ENCODE measurements at regions of chr18 and their contacts with region 1.

Region 1: DNA sequence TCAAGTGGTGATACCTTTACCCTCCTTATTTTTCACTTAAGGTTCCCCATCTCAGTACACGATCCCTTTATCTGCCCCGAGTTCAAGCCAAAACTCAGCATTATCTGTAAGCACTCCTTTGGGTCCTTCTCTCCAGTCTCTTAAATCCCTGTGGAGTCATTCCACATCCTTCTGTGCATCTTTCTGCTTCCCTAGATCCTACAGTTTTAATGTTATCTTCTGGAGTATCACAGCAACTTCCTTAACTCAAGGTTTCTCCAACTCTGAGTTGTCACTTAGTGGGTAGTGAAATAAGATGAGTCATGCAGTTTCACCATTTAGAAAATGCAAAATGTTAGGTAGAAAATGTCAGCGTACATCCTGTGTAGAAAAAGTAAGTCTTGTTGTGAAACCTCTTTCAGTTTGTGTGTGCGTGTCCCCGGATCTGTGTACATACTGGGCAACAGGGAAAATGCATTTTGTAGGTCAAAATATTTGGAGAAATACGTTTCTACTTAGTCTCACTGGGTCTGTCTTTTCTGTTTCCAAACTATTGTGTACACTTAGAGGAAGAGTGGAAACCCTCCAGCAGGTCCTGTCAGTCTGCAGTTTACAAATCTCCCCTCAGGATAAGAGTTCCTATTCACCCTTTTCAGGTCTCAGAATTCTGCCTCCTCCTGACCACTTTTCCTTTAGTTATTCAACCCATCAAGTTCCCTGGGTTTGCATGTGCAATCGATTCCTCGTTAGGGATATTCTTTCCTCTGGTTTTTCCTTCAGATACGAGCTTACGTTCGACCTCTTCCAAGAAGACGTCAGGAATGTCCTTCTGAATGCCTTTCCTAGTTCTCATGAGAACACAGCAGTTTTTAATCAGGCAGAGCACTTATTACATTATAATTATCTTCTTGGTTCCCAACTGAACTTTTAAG is 154.8 kb downstream of the TGIF1 start:
- DNase-seq: peak; percentile 80
- ATAC-seq: peak; percentile 90
- H3K4me3 ChIP-seq: peak overlapping the region; percentile 57
- H3K27ac ChIP-seq: peak overlapping the region; percentile 80
- H3K4me1 ChIP-seq: peaks cover 25% of the 10 kb centered on the region
- H3K27me3 ChIP-seq: no peaks in the 10 kb centered on the region
- CTCF ChIP-seq: no peak
- EP300 ChIP-seq: peak; percentile 49 to 57; a peak in 2 of 4 replicates
- POLR2A ChIP-seq: 0 out of 2 replicates have a peak, but pooled peaks have one; percentile 32
- RAD21 ChIP-seq: no peak

Region 2: DNA sequence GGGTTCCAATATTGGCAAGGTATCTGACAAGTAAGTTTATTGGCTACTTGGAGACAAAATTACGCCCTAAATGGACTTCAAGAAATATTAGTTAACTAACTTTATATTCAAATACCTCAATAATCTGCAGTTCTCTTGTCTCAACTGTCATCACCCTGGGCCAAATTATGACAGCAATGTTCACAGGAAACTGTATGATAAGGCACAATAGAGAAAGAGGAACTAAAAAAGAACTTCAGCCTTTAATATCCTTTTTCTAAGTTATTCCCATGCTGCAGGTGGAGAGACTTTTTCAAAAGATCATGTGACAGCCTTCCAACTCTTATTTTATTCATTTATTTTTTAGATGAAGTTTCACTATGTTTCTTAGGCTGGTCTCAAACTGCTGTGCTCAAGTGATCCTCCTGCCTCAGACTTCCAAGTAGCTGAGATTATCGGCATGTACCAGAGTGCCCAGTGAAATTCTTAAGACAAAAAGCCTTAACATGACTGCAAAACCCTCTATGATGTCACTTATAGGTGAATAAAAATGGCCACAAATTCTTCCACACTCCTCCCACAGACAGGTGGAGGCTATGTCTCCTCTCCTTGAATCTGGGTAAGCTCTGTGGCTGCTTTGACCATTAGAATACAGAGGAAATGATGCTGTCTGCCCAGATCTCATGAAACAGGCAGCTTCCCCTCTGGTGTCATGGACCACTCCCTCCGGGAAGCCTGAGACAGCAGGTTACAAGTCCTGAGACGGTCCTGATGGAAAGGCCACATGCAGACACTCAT is 56.2 kb after region 1 on chr18:
- CTCF ChIA-PET with region 1: interaction called, 14 read pairs
- POLR2A ChIA-PET with region 1: interaction called, 4 read pairs
- RAD21 ChIA-PET with region 1: interaction called, 22 read pairs
- SMC1A ChIA-PET with region 1: interaction called, 27 read pairs
- in situ Hi-C with region 1: no loop called
- intact Hi-C with region 1: no loop called
- DNase-seq: no peak
- ATAC-seq: peak; percentile 55
- H3K4me3 ChIP-seq: no peak overlapping the region
- H3K27ac ChIP-seq: no peak overlapping the region
- H3K4me1 ChIP-seq: peaks cover 8% of the 10 kb centered on the region
- H3K27me3 ChIP-seq: no peaks in the 10 kb centered on the region
- CTCF ChIP-seq: no peak
- EP300 ChIP-seq: no peak
- POLR2A ChIP-seq: no peak
- RAD21 ChIP-seq: no peak

Measured in GM12878 (cell line).